Head of caudate nucleus (tissue), 42 donors: ENCODE measurements at regions of chr3 and their contacts with region 1.

Region 1: DNA sequence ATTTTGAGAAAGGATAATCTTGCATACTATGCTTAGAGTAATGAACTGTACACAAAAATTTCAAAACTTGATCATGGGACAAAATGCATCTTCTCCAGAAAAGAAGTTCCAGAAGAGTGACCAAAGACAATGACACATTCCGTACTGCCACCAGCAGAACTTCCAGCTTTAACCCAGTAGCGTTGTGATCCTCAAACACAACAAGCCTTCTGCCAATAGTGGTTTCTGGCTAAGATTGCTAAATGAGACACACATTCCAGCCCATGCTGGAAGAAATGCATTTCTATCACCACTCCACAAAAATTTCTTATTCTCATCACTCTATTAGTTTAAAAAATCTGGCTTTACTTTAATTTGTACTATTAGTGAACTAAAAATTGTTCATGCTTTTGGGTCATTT is 334.9 kb downstream of the TBC1D5 start:
- DNase-seq: no peak

Region 2: DNA sequence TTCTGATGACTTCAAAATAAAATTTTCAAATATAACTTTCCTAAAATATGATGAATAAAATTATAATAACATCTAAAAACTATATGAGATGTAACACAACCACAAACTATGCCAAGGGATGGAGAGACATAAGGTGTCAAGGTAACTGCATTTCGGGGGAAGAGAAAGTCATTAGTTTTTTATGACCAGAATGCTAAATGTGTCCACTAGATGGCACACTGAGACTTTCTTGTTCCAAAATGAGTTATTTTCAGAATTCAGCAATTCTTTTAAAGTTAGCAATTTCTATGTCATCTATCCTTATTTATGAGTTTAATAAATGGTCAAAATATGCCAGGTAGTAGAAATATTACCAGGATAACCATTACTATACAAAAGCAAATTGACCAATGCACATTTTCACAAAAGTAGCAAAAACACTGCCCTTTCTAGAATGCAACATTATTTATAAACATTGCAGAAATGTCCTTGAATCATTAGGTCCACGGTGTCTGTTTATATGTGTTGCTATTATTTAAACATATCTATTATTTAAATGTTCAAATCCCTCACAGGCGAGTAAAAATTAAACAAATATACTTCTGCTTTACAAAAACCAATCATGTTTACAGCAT is 148.6 kb before region 1 on chr3:
- intact Hi-C with region 1: loop called (anchors 5 kb)
- DNase-seq: peak in 8 of 42 donors; percentile 12 to 63 (median 29)

Region 3: DNA sequence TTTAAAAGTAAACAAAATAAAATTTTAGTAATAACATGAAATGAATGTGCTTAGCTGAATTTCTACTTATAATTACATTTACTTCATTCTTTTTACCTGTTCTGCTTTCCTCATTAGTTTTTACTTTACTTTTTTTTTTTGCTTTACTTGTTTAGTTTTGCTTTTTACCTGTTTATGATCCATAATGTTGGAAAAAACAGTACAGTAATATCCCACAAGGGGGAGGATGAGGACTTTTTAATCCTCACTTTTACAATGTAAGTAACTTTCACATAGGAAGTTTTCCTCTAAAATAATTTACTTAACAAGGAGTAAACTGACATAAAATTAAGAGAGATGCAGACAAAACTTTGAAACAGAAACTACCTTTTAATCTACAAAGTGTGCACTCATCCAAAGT is 66.2 kb after region 1 on chr3:
- intact Hi-C with region 1: no loop called
- DNase-seq: no peak